OCI-LY7 (cell line): ENCODE measurements at regions of chr18 and their contacts with region 1.

Region 1: DNA sequence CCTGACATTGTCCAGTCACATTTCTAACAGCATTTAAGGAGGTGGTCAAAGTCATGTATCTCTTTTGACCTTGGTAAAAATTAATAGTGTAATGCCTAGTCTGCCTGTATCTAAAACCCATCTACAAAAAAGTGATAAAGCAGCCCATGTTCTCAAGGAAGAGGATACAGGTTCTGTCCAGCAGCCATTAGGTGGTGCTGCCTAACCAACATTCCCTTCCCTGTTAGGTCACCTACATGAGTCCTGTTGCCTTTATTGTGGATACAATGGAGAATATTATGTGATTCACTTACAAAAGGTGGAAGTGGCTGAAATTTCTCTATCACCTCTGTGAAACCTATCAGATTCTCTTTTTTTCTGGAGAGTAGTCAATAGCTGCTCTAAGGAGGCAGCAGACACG is 52.5 kb downstream of the AQP4 start:
- DNase-seq: peak; percentile 20
- H3K4me3 ChIP-seq: no peak overlapping the region
- H3K27ac ChIP-seq: no peak overlapping the region
- H3K4me1 ChIP-seq: no peaks in the 10 kb centered on the region
- CTCF ChIP-seq: peak; percentile 64

Region 2: GRCh38 chr18:26757263-26758019 is 55.6 kb before region 1 on chr18:
- CTCF ChIA-PET with region 1: no interaction called
- POLR2A ChIA-PET with region 1: no interaction called
- intact Hi-C with region 1: loop called (anchors 10 kb)
- DNase-seq: no peak
- H3K4me3 ChIP-seq: no peak overlapping the region
- H3K27ac ChIP-seq: no peak overlapping the region
- H3K4me1 ChIP-seq: no peaks in the 10 kb centered on the region
- CTCF ChIP-seq: no peak

Region 3: GRCh38 chr18:27213123-27213717 is 400.2 kb after region 1 on chr18:
- CTCF ChIA-PET with region 1: no interaction called
- POLR2A ChIA-PET with region 1: no interaction called
- intact Hi-C with region 1: no loop called
- DNase-seq: no peak
- H3K4me3 ChIP-seq: no peak overlapping the region
- H3K27ac ChIP-seq: no peak overlapping the region
- H3K4me1 ChIP-seq: no peaks in the 10 kb centered on the region
- CTCF ChIP-seq: no peak